HepG2 (cell line): ENCODE measurements at regions of chr21 and their contacts with region 1.

Region 1: GRCh38 chr21:41816220-41817165 is 49.6 kb upstream of the RIPK4 start:
- DNase-seq: peak; percentile 23
- ATAC-seq: peak; percentile 89
- H3K4me3 ChIP-seq: no peak overlapping the region
- H3K27ac ChIP-seq: no peak overlapping the region
- H3K4me1 ChIP-seq: no peaks in the 10 kb centered on the region
- H3K27me3 ChIP-seq: no peaks in the 10 kb centered on the region; a peak in 1 of 5 replicates
- CTCF ChIP-seq: peak; percentile 82
- EP300 ChIP-seq: no peak
- POLR2A ChIP-seq: no peak
- RAD21 ChIP-seq: peak; percentile 68

Region 2: DNA sequence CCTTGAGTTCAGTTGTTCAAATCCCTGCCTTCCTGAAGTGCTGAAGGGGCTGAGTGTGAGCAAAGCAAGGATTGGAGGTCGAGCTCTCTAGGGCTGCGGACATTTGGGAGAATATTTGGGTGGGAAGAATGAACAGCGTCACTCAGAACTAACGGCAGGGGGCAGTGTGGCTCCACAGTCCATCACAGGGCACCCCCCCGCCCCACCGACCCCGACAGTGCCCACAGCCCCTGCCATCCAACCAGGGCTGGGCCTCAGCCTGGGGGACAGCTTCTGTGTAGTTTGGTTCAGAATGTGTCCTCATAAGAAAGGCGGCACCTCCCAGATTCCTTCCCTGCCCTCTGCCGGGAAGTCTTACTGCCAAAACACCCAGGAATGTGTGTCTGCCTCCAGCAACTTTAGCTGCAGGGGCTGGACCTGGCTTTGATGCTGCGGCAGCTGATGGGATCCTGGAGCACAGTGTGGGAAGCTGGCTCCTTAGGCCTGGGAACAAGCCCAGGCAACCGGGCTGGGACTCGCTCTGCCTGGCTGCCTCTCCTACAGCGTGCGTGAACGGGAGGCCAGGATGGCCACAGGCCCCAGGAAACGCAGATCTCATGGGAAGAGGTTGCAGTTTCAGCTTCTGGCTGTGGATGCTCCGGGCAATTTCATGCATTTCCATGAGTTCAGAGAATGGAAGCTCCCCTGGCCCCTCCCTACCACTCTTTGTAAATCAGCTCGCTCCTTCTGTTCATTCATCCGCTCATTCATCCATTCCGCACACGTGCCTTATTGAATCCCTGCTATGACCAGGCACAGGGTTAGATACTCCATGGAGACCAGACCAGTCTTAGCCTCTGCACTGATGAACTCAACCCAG is 203.6 kb before region 1 on chr21:
- CTCF ChIA-PET with region 1: interaction called, 78 read pairs
- POLR2A ChIA-PET with region 1: interaction called, 3 read pairs
- in situ Hi-C with region 1: no loop called
- intact Hi-C with region 1: loop called (anchors 1 kb)
- DNase-seq: peak; percentile 15
- ATAC-seq: peak; percentile 83
- H3K4me3 ChIP-seq: no peak overlapping the region
- H3K27ac ChIP-seq: no peak overlapping the region
- H3K4me1 ChIP-seq: peaks cover 11% of the 10 kb centered on the region
- H3K27me3 ChIP-seq: peaks cover 4 to 28% of the 10 kb centered on the region in 2 experiments; a peak in 3 of 5 replicates
- CTCF ChIP-seq: peak; percentile 87
- EP300 ChIP-seq: no peak
- POLR2A ChIP-seq: no peak
- RAD21 ChIP-seq: peak; percentile 75

Region 3: DNA sequence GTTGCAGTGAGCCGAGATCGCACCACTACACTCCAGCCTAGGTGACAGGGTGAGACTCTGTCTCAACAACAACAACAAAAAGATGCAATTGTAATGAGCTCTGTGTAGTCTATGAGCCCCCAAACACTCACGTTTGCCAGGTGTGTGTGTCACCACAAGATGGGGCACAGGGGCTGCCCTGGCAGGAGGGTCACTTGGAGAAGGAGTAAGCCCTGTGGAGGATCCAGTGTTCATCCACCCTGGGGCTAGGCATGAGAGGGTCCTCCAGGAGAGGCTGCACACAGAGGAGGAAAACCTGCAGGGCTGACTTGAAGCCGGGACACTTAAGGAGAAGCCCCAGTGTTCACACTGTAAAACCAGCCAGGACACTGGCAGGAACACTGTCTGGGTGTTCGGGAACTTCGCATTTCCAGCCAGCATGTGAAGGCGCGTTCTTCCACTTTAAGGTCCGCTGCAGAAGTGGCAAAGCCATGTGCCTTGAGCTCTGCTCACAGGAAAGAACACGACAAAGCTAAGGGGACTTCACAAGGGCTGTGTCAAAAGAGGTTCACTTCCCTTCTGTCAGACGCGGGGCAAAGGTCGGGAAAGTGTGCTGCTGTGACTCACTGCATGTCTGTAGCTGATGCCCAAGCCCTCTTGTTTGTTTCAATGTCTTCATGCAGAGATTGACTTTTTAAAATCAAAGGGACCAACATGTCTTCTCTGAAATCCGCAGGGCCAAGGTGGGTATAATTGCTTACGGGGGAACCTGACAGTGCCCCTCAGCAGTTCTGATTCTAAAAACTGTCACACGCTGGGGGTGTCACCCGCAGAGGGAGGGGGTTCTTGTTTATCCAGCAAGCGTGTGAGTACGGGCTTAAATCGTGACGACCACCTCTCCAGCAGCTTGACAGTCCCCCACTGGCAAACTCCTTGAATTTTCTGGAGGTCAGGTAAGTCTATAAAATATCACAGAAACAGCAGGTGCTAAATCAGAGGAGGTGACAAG is 152.4 kb before region 1 on chr21:
- CTCF ChIA-PET with region 1: no interaction called
- POLR2A ChIA-PET with region 1: no interaction called
- in situ Hi-C with region 1: no loop called
- intact Hi-C with region 1: loop called (anchors 2 kb)
- DNase-seq: peak; percentile 80
- ATAC-seq: peak; percentile 87
- H3K4me3 ChIP-seq: peak overlapping the region in 2 of 3 experiments; percentile 4 to 60; a peak in 2 of 6 replicates
- H3K27ac ChIP-seq: no peak overlapping the region
- H3K4me1 ChIP-seq: peaks cover 24% of the 10 kb centered on the region
- H3K27me3 ChIP-seq: peaks cover 2 to 37% of the 10 kb centered on the region in 2 experiments; a peak in 4 of 5 replicates
- CTCF ChIP-seq: peak; percentile 64
- EP300 ChIP-seq: no peak
- POLR2A ChIP-seq: no peak
- RAD21 ChIP-seq: 0 out of 2 replicates have a peak, but pooled peaks have one; percentile 28

Region 4: GRCh38 chr21:41695513-41695912 is 121.0 kb before region 1 on chr21:
- CTCF ChIA-PET with region 1: no interaction called
- POLR2A ChIA-PET with region 1: no interaction called
- in situ Hi-C with region 1: no loop called
- intact Hi-C with region 1: no loop called
- DNase-seq: no peak
- ATAC-seq: no peak
- H3K4me3 ChIP-seq: no peak overlapping the region
- H3K27ac ChIP-seq: no peak overlapping the region
- H3K4me1 ChIP-seq: peaks cover 28% of the 10 kb centered on the region
- H3K27me3 ChIP-seq: peaks cover 0 to 16% of the 10 kb centered on the region in 2 experiments; a peak in 4 of 5 replicates
- CTCF ChIP-seq: no peak
- EP300 ChIP-seq: no peak
- POLR2A ChIP-seq: no peak
- RAD21 ChIP-seq: no peak

Region 5: GRCh38 chr21:41777951-41778874 is 38.3 kb before region 1 on chr21:
- CTCF ChIA-PET with region 1: interaction called, 3 read pairs
- POLR2A ChIA-PET with region 1: no interaction called
- in situ Hi-C with region 1: no loop called
- intact Hi-C with region 1: loop called (anchors 2 kb)
- DNase-seq: peak; percentile 51
- ATAC-seq: peak; percentile 75
- H3K4me3 ChIP-seq: no peak overlapping the region
- H3K27ac ChIP-seq: no peak overlapping the region
- H3K4me1 ChIP-seq: peaks cover 41% of the 10 kb centered on the region
- H3K27me3 ChIP-seq: peaks cover 4 to 36% of the 10 kb centered on the region in 2 experiments
- CTCF ChIP-seq: peak; percentile 90
- EP300 ChIP-seq: no peak
- POLR2A ChIP-seq: no peak
- RAD21 ChIP-seq: peak; percentile 89

Region 6: DNA sequence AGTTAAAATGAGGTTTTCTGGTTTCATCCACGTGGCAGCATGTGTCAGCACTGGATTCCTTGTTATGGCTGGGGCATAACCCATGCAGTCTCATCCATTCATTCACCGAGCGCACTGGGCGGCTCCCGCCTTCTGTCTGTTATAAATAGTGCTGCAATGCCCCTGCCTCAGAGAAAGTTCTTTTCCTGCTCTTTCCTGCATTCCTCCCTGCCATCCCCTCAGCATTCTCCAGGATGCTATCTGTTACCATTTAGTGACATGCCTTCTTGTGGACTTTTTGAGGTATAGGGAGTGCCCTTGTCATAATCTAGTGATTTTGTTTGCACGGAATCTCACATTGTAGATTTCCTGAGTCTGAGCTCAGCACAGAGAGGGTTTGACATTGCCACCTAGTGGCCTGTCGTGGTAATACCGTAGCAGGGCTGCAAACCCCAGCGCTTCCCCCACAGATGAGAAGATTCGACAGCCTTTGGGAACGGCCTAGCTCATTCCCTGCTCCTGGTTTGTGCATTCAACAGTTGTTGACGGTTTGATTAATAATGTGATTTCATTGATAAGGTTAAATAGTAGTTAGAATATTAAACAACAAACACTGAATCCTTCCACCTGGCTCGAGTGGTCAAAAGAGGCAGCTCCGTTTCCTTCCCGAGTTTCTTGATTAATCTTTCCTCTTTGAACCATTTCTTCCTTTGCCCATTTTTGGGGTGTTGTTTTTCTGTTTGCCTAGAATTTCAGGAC is 300.9 kb after region 1 on chr21:
- CTCF ChIA-PET with region 1: interaction called, 3 read pairs
- POLR2A ChIA-PET with region 1: no interaction called
- in situ Hi-C with region 1: no loop called
- intact Hi-C with region 1: loop called (anchors 2 kb)
- DNase-seq: peak; percentile 38
- ATAC-seq: peak; percentile 69
- H3K4me3 ChIP-seq: no peak overlapping the region
- H3K27ac ChIP-seq: no peak overlapping the region
- H3K4me1 ChIP-seq: peaks cover 61% of the 10 kb centered on the region
- H3K27me3 ChIP-seq: peaks cover 0 to 26% of the 10 kb centered on the region in 2 experiments; a peak in 4 of 5 replicates
- CTCF ChIP-seq: peak; percentile 87
- EP300 ChIP-seq: no peak
- POLR2A ChIP-seq: no peak
- RAD21 ChIP-seq: peak; percentile 61